ENCODE measurements at regions of chr10 and their contacts with region 1.

Region 1: GRCh38 chr10:68566955-68567354 is 6.8 kb downstream of the TET1 start:
- DNase-seq: no peak
- ATAC-seq: no peak
- H3K4me3 ChIP-seq: no peak overlapping the region
- H3K27ac ChIP-seq: no peak overlapping the region
- H3K4me1 ChIP-seq: peaks cover 6 to 20% of the 10 kb centered on the region in 2 experiments
- H3K27me3 ChIP-seq: no peaks in the 10 kb centered on the region
- CTCF ChIP-seq: no peak
- EP300 ChIP-seq: no peak
- POLR2A ChIP-seq: no peak
- RAD21 ChIP-seq: no peak

Region 2: DNA sequence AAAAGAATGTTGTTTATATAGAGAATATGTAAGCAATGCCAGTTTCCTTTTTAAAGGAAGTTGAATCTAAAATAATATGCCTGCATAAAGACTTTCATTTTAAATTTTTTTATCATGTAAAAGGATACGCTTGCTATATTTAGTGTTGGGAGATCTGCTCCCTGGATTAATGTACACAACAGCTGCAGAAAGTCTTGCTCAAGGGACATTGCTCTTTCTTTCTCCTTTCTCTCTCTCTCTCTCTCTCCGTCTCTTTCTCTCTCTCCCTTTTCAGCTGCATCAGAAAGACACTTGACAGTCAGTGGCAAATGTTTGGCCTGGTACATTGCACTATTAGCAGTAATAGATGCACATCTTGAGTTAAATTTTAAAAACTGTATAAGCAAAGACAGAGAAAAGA is 456.9 kb before region 1 on chr10:
- CTCF ChIA-PET with region 1: no interaction called
- POLR2A ChIA-PET with region 1: no interaction called
- in situ Hi-C with region 1: no loop called
- intact Hi-C with region 1: no loop called
- DNase-seq: no peak
- ATAC-seq: no peak
- H3K4me3 ChIP-seq: no peak overlapping the region
- H3K27ac ChIP-seq: no peak overlapping the region
- H3K4me1 ChIP-seq: no peaks in the 10 kb centered on the region
- H3K27me3 ChIP-seq: peaks cover 13 to 26% of the 10 kb centered on the region in 2 experiments; a peak in 4 of 5 replicates
- CTCF ChIP-seq: no peak
- EP300 ChIP-seq: no peak
- POLR2A ChIP-seq: no peak
- RAD21 ChIP-seq: no peak

Region 3: DNA sequence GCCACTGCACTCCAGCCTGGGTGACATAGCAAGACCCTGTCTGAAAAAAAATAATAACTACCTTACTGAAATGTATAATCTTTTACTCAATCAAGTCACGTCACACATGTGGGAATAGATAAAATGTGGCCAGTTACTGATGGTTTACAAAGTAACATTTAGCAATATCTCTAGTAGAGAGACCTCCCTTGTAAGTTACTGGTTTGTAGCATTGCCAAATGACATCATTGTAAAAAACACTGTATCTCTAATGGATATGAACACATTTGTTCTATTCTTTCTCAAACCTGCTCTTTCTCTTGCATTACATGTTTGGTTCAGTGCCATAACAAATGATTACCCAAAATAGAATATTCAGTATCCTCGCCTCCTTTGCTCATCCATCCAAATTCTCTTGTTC is 12.0 kb after region 1 on chr10:
- CTCF ChIA-PET with region 1: no interaction called
- POLR2A ChIA-PET with region 1: interaction called, 19 read pairs
- in situ Hi-C with region 1: no loop called
- intact Hi-C with region 1: no loop called
- DNase-seq: no peak
- ATAC-seq: no peak
- H3K4me3 ChIP-seq: no peak overlapping the region
- H3K27ac ChIP-seq: no peak overlapping the region
- H3K4me1 ChIP-seq: no peaks in the 10 kb centered on the region
- H3K27me3 ChIP-seq: no peaks in the 10 kb centered on the region
- CTCF ChIP-seq: no peak
- EP300 ChIP-seq: no peak
- POLR2A ChIP-seq: no peak
- RAD21 ChIP-seq: no peak